Caki2 (cell line): ENCODE measurements at regions of chr7 and their contacts with region 1.

Region 1: DNA sequence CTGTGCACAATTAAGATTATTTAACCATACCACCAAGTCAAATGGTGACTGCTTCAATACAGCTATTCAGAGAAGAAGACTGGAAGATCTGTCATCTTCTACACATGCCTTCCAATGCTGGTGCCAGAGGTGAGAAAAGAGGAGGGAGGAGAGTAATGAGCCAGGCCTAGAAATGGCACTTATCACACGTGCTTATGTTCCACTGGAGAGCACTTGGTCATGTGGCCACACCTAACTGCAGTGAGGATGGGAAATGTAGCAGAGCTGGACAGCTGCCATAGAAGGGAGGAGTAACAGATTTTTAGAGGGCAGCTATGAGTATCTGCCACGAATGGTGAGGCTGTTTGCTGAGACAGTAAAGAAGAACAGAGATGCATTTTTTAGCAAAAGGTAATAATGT is 77.1 kb downstream of the MPLKIP start:
- DNase-seq: peak; percentile 60

Region 2: DNA sequence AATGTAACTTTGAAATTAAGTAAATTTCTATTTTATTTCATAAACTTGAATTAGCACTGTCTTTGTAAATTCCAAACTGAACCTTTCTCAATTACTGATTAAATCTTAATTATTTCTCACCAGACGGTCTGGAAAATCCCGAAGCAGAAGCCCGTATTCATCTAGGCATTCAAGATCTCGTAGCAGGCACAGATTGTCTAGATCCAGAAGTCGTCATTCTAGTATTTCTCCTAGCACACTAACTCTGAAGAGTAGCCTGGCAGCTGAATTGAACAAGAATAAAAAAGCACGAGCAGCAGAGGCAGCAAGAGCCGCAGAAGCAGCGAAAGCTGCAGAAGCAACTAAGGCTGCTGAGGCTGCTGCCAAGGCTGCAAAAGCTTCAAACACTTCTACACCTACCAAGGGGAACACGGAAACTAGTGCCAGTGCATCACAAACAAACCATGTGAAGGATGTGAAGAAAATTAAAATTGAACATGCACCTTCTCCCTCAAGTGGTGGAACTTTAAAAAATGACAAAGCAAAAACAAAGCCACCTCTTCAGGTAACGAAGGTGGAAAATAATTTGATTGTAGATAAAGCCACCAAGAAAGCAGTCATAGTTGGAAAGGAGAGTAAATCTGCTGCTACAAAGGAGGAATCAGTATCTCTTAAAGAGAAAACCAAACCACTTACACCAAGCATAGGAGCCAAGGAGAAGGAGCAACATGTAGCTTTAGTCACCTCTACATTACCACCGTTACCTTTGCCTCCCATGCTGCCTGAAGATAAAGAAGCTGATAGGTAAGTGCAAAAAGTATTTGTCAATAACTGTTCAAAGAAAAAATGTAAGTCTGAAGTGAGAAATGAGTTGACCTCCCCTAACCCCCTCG is 69.6 kb before region 1 on chr7:
- in situ Hi-C with region 1: loop called (anchors 10 kb)
- DNase-seq: no peak

Region 3: DNA sequence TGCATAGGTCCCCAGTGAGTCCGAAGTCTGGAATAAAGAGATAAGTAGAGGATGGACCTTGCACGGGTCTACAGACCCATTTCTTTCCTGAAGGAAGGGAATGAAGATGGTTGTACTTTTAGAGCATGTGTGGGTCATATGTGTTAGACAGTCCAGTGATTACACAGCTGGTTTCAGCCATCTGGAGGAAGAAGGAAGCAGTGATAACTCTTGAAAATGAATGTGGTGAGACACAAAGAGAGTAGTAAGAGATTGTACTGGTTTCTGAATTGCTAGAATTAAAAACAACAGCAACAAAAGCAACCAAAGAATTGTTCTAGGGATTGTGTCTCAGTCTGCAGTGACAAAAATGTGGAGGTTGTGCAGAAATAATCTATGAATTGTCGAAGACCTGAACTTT is 336.4 kb after region 1 on chr7:
- in situ Hi-C with region 1: no loop called
- DNase-seq: no peak